Calu3 (cell line): ENCODE measurements at regions of chr5 and their contacts with region 1.

Region 1: GRCh38 chr5:32642276-32643002 is 57.1 kb downstream of the SUB1 start:
- DNase-seq: no peak
- H3K4me3 Mint-ChIP-seq: no peak overlapping the region
- H3K27ac Mint-ChIP-seq: peak overlapping the region; percentile 60
- H3K4me1 Mint-ChIP-seq: peaks cover 23% of the 10 kb centered on the region
- H3K27me3 Mint-ChIP-seq: no peaks in the 10 kb centered on the region
- CTCF ChIP-seq: no peak

Region 2: GRCh38 chr5:32147236-32147635 is 495.2 kb before region 1 on chr5:
- CTCF ChIA-PET with region 1: no interaction called
- intact Hi-C with region 1: no loop called
- DNase-seq: no peak
- H3K4me3 Mint-ChIP-seq: no peak overlapping the region
- H3K27ac Mint-ChIP-seq: peak overlapping the region; percentile 5
- H3K4me1 Mint-ChIP-seq: peaks cover 43% of the 10 kb centered on the region
- H3K27me3 Mint-ChIP-seq: no peaks in the 10 kb centered on the region
- CTCF ChIP-seq: no peak

Region 3: DNA sequence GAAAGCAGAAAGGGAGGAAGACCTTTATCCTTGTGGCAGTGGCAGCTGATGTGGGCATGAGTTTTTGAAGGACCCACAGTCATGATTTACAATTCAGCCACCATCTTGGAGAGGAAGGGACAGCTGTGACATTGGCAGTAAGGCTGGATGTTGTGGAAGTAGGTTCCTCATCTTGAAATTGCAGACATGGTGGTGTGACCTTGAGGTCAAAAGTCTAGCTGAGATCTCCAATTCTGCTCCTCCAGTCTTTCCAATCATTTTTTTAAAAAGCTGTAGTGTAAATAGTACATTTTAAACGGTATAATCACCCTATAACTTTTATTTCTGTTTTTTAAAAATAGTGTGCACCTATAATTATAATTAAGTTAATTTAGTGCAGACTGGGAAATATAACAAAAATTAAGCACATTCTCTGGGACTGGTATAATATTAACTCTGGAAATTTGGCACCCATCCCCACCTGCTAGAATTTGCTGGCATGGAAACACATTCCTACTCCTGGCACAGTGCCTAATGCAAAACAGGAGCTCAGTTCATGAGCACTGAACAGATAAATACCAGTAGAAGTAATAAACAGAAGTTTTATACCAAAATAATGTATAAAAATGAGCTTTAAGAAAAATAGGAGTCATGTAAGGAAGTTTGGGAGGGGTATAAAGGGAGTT is 44.9 kb after region 1 on chr5:
- CTCF ChIA-PET with region 1: no interaction called
- intact Hi-C with region 1: loop called (anchors 5 kb)
- DNase-seq: peak; percentile 75
- H3K4me3 Mint-ChIP-seq: peak overlapping the region; percentile 3
- H3K27ac Mint-ChIP-seq: no peak overlapping the region
- H3K4me1 Mint-ChIP-seq: peaks cover 31% of the 10 kb centered on the region
- H3K27me3 Mint-ChIP-seq: no peaks in the 10 kb centered on the region
- CTCF ChIP-seq: no peak

Region 4: DNA sequence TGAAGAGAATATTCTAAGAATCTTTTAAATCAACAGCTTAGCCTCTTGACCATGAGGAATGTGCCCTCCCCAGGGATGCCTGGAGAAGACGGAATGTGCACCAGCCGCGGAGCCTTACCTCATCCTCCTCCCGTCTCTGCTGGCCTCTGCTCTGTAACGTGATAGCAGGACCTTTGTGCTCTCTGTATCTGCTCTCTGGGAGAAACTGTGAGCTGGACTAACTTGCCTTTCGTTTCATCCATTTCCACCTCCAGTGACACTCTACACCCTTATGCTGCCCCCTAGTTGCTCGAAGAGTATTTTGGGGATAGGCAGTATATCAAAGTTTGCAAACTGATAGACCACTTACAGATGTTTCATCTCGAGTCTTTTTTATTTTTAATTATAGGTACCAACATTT is 210.1 kb after region 1 on chr5:
- CTCF ChIA-PET with region 1: no interaction called
- intact Hi-C with region 1: loop called (anchors 5 kb)
- DNase-seq: peak; percentile 25
- H3K4me3 Mint-ChIP-seq: no peak overlapping the region
- H3K27ac Mint-ChIP-seq: no peak overlapping the region
- H3K4me1 Mint-ChIP-seq: peaks cover 6% of the 10 kb centered on the region
- H3K27me3 Mint-ChIP-seq: peaks cover 41% of the 10 kb centered on the region
- CTCF ChIP-seq: peak; percentile 11

Region 5: GRCh38 chr5:33008751-33009418 is 366.4 kb after region 1 on chr5:
- CTCF ChIA-PET with region 1: no interaction called
- intact Hi-C with region 1: loop called (anchors 10 kb)
- DNase-seq: peak; percentile 78
- H3K4me3 Mint-ChIP-seq: peak overlapping the region; percentile 7
- H3K27ac Mint-ChIP-seq: peak overlapping the region; percentile 58
- H3K4me1 Mint-ChIP-seq: peaks cover 16% of the 10 kb centered on the region
- H3K27me3 Mint-ChIP-seq: no peaks in the 10 kb centered on the region
- CTCF ChIP-seq: no peak